ENCODE measurements at regions of chr3 and their contacts with region 1.

Region 1: DNA sequence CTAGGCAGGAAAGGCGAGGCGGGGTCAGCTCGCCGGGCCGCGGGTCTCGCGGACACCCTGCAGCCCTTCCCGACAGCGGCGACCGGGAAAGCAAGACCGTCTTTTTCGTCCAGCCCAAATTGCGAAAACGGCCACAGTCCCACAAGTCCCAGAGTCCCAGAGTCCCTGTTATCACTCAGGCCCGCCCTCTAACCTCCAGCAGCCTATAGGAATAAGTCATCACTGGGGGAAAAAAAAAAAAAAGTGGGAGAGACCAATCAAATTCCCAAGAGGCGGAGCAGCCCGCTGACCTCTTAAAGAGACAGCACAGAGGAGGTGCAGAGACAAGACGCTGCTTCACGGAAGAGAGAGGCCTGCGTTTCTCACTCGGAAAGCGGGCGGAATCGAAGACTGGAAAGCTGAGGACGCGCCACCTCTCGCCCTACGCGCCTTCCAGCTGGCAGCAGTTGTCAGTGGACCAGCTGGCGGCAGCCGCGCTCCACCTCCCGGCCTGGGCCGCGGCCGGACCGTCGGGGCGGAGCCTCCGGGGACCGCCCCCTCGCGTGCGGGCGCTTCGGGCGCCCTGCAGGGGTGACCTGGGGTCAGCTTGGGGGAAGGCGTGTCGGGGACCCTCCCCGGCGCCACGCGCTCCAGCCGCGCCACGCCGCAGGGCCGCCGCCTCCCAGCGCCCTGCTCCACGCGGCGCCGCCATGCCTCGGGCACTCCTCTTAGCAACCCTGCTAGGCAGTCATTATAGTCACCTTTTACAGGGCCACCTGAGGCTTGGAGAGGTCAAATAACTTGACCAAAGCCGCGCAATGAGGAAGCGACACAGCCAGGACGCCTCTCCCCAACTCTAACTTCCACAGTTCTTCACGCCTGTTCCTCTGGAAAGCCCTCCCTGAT is at the start of gene TPRA1:
- DNase-seq: peak; percentile 83
- H3K4me3 Mint-ChIP-seq: peak within 1 kb of the TSS; percentile 90
- H3K27ac Mint-ChIP-seq: peak within 1 kb of the TSS; percentile 95
- H3K4me1 Mint-ChIP-seq: peaks cover 18% of the 10 kb centered on the region
- H3K27me3 Mint-ChIP-seq: no peaks in the 10 kb centered on the region
- total RNA-seq, gene TPRA1: 36.0 and 37.1 TPM in 2 replicates

Region 2: DNA sequence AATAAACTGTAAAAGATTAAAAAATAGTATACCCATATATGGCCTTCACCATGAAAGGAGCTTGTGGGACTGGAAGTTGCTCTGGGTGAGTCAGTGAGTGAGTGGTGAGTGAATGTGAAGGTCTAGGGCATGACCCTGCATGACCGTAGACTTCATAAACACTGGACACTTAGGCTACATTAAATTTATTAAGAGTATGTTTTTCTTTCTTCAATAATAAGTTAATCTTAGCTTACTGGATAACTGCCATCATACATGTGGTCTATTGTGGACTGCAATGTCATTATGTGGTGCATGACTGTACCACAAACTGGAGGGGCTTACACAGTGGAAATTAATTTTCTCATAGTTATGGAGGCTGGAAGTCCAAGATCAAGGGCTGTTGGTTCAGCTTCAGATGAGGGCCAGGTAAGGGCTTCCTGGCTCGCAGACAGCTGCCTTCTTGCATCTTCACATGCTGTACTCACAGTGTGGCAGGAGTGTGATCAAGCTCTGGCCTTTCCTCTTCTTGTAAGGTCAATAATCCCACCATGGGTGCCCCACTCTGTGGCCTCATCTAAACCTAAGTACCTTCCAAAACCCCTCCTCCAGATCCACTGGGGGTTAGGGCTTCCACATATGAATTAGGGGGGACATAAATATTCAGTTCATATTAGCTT is 438.7 kb before region 1 on chr3:
- intact Hi-C with region 1: no loop called
- DNase-seq: no peak
- H3K4me3 Mint-ChIP-seq: no peak overlapping the region
- H3K27ac Mint-ChIP-seq: no peak overlapping the region
- H3K4me1 Mint-ChIP-seq: no peaks in the 10 kb centered on the region
- H3K27me3 Mint-ChIP-seq: no peaks in the 10 kb centered on the region

Region 3: DNA sequence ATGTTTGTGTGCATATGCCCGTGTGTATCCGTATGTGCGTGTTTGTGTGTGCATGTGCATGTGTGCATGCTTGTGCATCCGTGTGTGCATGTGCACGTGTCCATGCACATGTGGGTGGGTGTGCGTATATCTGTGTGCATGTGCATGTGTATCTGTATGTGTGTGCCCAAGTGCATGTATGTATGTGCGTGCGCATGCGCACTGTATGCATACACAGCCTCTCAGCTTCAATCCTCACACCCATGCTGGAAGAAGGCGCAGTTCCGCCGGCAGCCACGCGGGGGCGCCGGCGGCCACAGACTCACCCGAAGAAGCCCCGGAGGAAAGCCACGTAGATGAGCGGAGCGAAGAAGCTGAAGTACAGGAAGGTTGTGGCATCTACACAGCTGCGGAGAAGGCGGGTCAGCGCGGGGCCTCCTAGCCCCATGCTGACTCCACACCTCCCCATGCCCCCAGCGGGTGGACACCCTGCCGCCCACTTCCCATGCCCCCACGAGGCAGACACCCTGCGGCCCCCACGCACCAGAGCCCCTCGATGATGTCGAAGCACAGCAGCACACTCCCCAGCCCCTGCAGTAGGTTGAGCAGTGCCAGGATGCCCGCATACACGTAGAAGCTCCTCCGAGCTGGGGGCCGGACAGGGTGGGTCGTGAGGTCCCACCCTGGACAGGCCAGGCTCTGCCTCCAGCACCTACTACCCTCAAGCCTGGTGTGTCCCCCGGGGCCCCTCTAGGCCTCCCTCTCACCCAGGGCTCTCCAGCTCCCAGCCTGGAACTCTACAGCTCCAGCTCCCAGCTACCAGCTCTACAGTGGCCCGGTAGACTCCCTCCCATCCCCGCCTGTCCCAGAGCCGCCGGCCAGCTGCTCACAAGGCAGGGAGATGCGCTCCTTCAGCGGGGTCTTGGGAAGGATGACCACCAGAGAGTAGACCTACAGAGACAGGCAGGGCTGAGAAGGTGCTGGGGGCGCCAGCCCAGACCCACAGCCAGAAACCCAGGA is 15.7 kb before region 1 on chr3:
- intact Hi-C with region 1: loop called (anchors 1 kb)
- DNase-seq: peak; percentile 83
- H3K4me3 Mint-ChIP-seq: no peak overlapping the region
- H3K27ac Mint-ChIP-seq: no peak overlapping the region
- H3K4me1 Mint-ChIP-seq: peaks cover 5% of the 10 kb centered on the region
- H3K27me3 Mint-ChIP-seq: no peaks in the 10 kb centered on the region

Region 4: DNA sequence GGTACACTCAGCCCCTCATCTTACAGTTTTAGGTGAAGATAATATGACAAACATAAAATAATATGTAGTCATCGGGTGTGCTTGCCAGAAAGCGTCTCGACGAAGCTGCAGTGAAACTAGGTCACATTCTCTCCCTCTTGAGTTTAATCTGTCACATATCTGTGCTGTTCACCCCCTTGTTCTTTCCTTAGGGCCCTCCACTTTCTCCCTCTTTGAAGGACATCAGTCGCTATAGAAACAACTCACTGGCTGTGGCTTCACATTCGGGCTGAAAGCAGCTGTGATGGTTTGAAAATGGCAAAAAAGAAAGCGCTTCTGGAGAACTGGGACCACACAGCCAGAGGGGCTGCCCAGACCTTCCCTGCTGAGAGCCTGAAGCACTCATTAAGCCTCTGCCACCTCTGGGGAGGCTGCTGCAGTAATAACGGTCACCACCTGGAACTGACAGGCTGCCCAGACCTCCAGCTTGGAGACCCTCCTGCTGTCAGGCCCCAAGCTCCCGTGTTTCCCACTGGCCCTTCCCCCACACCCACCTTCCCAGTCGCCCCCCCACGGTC is 132.3 kb after region 1 on chr3:
- intact Hi-C with region 1: no loop called
- DNase-seq: no peak
- H3K4me3 Mint-ChIP-seq: no peak overlapping the region
- H3K27ac Mint-ChIP-seq: no peak overlapping the region
- H3K4me1 Mint-ChIP-seq: peaks cover 2% of the 10 kb centered on the region
- H3K27me3 Mint-ChIP-seq: peaks cover 6% of the 10 kb centered on the region

Region 5: GRCh38 chr3:128549283-128550112 is 958.7 kb after region 1 on chr3:
- intact Hi-C with region 1: no loop called
- DNase-seq: no peak
- H3K4me3 Mint-ChIP-seq: no peak overlapping the region
- H3K27ac Mint-ChIP-seq: no peak overlapping the region
- H3K4me1 Mint-ChIP-seq: no peaks in the 10 kb centered on the region
- H3K27me3 Mint-ChIP-seq: peaks cover 20% of the 10 kb centered on the region